ENCODE measurements at regions of chr2 and their contacts with region 1.

Region 1: DNA sequence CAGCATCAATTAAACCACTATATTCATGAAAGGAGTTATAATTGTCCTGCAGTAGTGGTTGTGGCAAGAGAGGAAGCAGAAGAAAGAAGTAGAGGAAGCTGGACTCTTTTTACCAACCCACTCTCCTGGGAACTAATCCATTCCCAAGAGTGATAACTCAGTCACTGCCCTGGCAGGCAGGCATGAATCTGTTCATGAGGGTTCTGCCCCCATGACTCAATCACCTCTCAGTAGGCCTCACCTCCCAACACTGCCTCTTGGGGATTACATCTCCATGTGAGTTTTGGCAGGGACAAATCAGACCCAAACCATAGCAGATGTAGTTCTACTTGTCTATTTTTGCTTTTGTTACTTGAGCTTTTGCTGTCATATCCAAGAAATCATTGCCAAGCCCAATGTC is 232.7 kb upstream of the MAP2 start:
- DNase-seq: peak; percentile 5
- H3K4me3 ChIP-seq: no peak overlapping the region
- H3K27ac ChIP-seq: no peak overlapping the region
- H3K4me1 ChIP-seq: no peaks in the 10 kb centered on the region
- H3K27me3 ChIP-seq: no peaks in the 10 kb centered on the region
- CTCF ChIP-seq: no peak

Region 2: DNA sequence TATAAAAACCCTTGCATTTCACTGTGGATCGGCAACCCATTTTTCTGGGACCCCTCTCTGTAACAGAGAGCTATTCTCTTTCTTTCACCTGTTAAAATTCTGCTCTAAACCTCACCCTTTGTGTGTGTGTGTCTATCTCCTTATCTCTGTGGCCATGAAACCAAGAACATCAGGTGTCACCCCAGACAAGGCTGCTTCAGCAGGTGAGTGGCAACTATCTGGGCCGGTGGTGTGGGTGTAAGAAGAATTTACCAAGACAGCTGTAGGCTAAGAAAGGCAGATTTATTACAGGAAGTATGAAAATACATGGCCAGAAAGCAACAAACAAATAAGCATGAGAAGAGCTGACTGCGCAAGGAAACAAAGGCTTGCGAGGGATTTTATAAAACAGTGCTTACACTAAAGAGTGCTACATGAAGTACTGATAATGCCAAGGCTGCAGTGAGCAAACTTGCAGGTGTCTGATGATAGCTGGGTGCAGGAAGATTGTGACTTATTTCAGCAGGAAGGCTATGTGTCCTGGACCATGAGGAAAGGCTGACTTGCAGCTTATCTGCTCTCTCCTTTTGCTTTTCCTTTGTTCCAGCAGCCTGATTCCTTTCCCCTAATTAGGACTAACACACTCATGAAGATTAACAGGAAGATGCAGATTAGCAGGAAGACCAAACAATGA is 363.5 kb before region 1 on chr2:
- CTCF ChIA-PET with region 1: no interaction called
- dilution Hi-C with region 1: no loop called
- in situ Hi-C with region 1: loop called in 1 of 2 experiments (anchors 25 kb)
- intact Hi-C with region 1: no loop called
- DNase-seq: no peak
- H3K4me3 ChIP-seq: no peak overlapping the region
- H3K27ac ChIP-seq: no peak overlapping the region
- H3K4me1 ChIP-seq: no peaks in the 10 kb centered on the region
- H3K27me3 ChIP-seq: no peaks in the 10 kb centered on the region
- CTCF ChIP-seq: no peak

Region 3: DNA sequence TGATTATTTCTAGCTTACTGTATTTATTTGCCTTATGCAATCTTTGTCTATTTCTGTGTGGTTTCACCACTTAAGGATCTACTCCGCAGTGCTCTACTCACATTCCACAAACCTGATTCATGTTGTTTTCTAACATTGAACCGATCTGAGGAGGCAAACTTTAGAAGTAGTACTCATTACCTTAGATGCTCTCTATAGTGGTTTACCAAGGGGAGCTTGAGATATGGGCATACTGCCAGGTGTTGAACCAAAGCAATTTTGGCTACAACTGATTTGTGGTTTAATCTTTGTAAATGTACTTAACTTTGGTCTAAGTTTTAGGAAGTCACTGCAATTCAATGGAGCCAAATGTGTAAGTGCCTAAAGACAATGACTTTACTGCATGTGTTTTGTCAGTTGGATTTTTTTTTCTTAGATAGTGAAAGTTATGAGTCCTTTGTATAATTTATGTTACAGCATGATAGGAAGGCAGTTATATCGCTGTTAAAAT is 282.8 kb after region 1 on chr2:
- CTCF ChIA-PET with region 1: no interaction called
- dilution Hi-C with region 1: no loop called
- in situ Hi-C with region 1: no loop called
- intact Hi-C with region 1: no loop called
- DNase-seq: peak; percentile 88
- H3K4me3 ChIP-seq: no peak overlapping the region
- H3K27ac ChIP-seq: no peak overlapping the region
- H3K4me1 ChIP-seq: peaks cover 24% of the 10 kb centered on the region
- H3K27me3 ChIP-seq: no peaks in the 10 kb centered on the region
- CTCF ChIP-seq: no peak

Measured in mammary epithelial cell (primary cell).